PC-9 (cell line): ENCODE measurements at regions of chr17 and their contacts with region 1.

Region 1: DNA sequence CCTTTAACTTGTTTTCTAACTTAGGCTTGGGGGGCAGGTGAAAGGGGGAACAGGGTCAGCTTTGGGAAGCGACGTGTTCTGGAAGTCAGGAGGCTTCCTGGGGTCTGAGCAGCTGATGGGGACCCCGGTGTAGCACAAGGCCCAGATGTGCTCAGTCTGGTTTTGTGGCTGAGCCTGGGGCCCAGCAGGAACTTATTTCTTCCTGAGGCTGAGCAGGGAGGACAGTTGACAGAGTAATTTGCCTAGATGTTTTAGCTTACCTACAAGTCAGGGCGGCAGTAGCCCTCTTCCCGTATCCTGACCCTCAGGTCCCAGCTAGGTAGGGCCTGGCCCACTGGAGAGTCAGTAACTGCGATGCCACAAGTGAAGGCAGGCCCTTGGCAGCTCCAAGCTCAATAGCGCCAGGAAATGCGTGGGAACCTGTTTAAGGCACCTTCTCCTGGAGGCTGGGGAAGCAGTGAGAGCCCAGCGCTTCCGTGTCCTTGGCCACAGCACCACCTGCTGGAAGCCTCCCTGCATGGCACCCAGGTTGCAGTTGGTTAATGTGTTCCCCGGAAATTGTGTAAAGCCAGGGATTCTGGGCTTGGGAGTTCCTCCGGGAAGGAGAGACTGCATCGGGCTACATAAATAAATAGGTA is 5.2 kb downstream of the CCR7 start:
- DNase-seq: peak; percentile 79 to 91
- H3K4me3 ChIP-seq: no peak overlapping the region
- H3K27ac ChIP-seq: no peak overlapping the region
- H3K4me1 ChIP-seq: peaks cover 4% of the 10 kb centered on the region; the same call in 1 of the 2 replicates
- H3K27me3 ChIP-seq: peaks cover 19% of the 10 kb centered on the region
- CTCF ChIP-seq: peak; percentile 95

Region 2: DNA sequence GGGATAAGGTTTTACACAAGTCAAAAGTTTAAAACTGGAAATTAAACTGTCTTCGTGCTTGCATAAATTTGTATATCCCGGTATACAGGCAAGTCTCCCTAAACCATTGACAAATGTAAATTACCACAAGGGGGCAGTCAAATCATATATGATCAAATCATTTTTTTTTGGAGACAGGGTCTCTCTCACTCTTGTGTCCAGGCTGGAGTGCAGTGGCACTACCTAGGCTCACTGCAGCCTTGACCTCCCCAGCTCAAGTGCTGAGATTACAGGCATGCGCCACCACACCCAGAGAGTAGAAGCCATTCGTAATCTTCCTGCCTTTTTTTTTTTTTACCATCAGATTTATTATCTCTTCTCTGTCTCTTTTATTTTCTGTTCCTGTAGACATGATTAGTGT is 160.9 kb before region 1 on chr17:
- CTCF ChIA-PET with region 1: interaction called, 3 read pairs
- POLR2A ChIA-PET with region 1: no interaction called
- intact Hi-C with region 1: loop called (anchors 1 kb)
- DNase-seq: peak in 1 of 2 experiments; percentile 48
- H3K4me3 ChIP-seq: no peak overlapping the region
- H3K27ac ChIP-seq: no peak overlapping the region
- H3K4me1 ChIP-seq: no peaks in the 10 kb centered on the region
- H3K27me3 ChIP-seq: no peaks in the 10 kb centered on the region
- CTCF ChIP-seq: peak; percentile 70

Region 3: GRCh38 chr17:40531051-40531991 is 28.8 kb before region 1 on chr17:
- CTCF ChIA-PET with region 1: interaction called, 11 read pairs
- POLR2A ChIA-PET with region 1: no interaction called
- intact Hi-C with region 1: loop called (anchors 2 kb)
- DNase-seq: no peak
- H3K4me3 ChIP-seq: no peak overlapping the region
- H3K27ac ChIP-seq: no peak overlapping the region
- H3K4me1 ChIP-seq: peaks cover 35% of the 10 kb centered on the region
- H3K27me3 ChIP-seq: no peaks in the 10 kb centered on the region
- CTCF ChIP-seq: no peak

Region 4: GRCh38 chr17:40607641-40608040 is 47.6 kb after region 1 on chr17:
- CTCF ChIA-PET with region 1: no interaction called
- POLR2A ChIA-PET with region 1: no interaction called
- intact Hi-C with region 1: loop called (anchors 2 kb)
- DNase-seq: no peak
- H3K4me3 ChIP-seq: no peak overlapping the region
- H3K27ac ChIP-seq: no peak overlapping the region
- H3K4me1 ChIP-seq: peaks cover 24% of the 10 kb centered on the region
- H3K27me3 ChIP-seq: no peaks in the 10 kb centered on the region
- CTCF ChIP-seq: no peak

Region 5: DNA sequence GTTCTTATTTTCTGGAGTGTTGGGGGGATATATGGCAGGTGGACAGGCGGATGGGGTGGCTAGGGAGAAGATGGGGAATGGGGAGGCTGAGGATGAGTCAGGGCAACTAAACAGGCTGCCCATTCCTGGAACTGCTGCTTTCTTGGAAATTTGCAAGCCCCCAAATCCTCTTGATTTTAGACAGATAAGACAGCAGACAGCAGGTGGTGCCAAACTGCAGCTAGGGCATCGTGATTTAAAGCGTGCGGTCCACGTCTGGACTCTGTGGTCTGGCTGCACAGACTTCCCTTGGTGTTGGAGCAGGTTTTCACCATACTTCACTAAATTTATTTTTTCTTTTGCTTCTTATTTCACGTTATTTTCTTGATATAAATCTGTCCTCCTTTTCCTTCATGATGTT is 154.4 kb after region 1 on chr17:
- CTCF ChIA-PET with region 1: no interaction called
- POLR2A ChIA-PET with region 1: no interaction called
- intact Hi-C with region 1: no loop called
- DNase-seq: no peak
- H3K4me3 ChIP-seq: no peak overlapping the region
- H3K27ac ChIP-seq: no peak overlapping the region
- H3K4me1 ChIP-seq: no peaks in the 10 kb centered on the region
- H3K27me3 ChIP-seq: no peaks in the 10 kb centered on the region
- CTCF ChIP-seq: no peak